Heart right ventricle (tissue), 16 donors: ENCODE measurements at regions of chrX and their contacts with region 1.

Region 1: GRCh38 chrX:147911192-147912022 is at the start of gene FMR1:
- DNase-seq: peak; percentile 91
- ATAC-seq: peak; percentile 91 to 98 (median 96)
- H3K4me3 ChIP-seq: peak within 1 kb of the TSS; percentile 47 to 88 (median 79)
- H3K27ac ChIP-seq: peak within 1 kb of the TSS; percentile 61 to 93 (median 88)
- H3K4me1 ChIP-seq: peaks cover 0 to 36% (median 13%) of the 10 kb centered on the region in 9 donors
- H3K27me3 ChIP-seq: no peaks in the 10 kb centered on the region
- CTCF ChIP-seq: no peak
- total RNA-seq, gene FMR1: 21.3 to 30.2 (median 28.0) TPM

Region 2: DNA sequence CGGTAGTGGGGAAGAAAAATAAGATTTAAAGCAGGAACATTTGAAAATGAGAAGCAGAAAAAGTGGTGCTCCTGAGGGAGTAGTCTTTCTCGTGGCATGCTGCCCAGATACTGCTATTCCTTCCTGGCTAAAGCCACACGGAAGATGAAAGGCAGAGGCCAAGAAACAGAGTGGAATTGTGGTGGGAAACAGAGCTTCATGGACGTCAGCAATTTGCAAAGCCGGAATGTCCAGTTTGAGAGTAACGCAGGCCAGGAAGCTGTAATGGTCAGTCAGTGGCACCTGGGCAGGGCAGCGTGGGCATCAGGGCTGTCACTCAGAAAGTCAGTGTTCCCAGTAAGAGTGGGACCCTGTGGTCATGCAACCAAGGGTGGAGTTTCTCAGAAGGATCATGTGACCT is 63.4 kb before region 1 on chrX:
- intact Hi-C with region 1: no loop called
- DNase-seq: no peak
- ATAC-seq: no peak
- H3K4me3 ChIP-seq: no peak overlapping the region
- H3K27ac ChIP-seq: no peak overlapping the region
- H3K4me1 ChIP-seq: no peaks in the 10 kb centered on the region
- H3K27me3 ChIP-seq: no peaks in the 10 kb centered on the region
- CTCF ChIP-seq: no peak

Region 3: GRCh38 chrX:148024425-148025148 is 113.2 kb after region 1 on chrX:
- intact Hi-C with region 1: no loop called
- DNase-seq: no peak
- ATAC-seq: no peak
- H3K4me3 ChIP-seq: no peak overlapping the region
- H3K27ac ChIP-seq: no peak overlapping the region
- H3K4me1 ChIP-seq: no peaks in the 10 kb centered on the region
- H3K27me3 ChIP-seq: no peaks in the 10 kb centered on the region
- CTCF ChIP-seq: no peak

Region 4: GRCh38 chrX:148035380-148035779 is 124.0 kb after region 1 on chrX:
- intact Hi-C with region 1: loop called in 2 of 10 experiments (anchors 5 to 10 kb)
- DNase-seq: no peak
- ATAC-seq: peak in 7 of 8 donors; percentile 58 to 92 (median 78)
- H3K4me3 ChIP-seq: no peak overlapping the region
- H3K27ac ChIP-seq: peak overlapping the region in 5 of 10 donors; percentile 22 to 62 (median 50)
- H3K4me1 ChIP-seq: no peaks in the 10 kb centered on the region
- H3K27me3 ChIP-seq: no peaks in the 10 kb centered on the region
- CTCF ChIP-seq: no peak

Region 5: DNA sequence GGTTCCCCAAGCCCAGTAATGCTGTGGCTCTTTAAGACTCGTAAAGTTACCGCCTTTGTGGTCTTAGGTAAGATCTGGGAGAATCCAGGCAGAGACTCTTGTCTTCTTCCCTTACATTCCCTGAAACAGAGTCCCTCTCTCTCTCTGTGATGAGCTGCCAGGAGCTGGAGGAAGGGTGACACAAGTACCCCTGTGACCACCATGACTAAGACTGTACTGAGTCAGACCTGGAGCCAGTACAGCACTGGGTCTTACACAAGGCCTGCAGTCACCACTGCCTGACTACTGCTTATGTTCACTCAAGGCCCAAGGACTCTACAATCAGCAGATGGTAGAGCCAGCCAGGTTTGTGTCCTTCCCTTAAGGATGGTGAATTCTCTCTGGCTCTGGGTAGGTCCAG is 132.0 kb after region 1 on chrX:
- intact Hi-C with region 1: loop called in 2 of 10 experiments (anchors 5 to 10 kb)
- DNase-seq: no peak
- ATAC-seq: no peak
- H3K4me3 ChIP-seq: no peak overlapping the region
- H3K27ac ChIP-seq: no peak overlapping the region
- H3K4me1 ChIP-seq: no peaks in the 10 kb centered on the region
- H3K27me3 ChIP-seq: no peaks in the 10 kb centered on the region
- CTCF ChIP-seq: no peak

Region 6: DNA sequence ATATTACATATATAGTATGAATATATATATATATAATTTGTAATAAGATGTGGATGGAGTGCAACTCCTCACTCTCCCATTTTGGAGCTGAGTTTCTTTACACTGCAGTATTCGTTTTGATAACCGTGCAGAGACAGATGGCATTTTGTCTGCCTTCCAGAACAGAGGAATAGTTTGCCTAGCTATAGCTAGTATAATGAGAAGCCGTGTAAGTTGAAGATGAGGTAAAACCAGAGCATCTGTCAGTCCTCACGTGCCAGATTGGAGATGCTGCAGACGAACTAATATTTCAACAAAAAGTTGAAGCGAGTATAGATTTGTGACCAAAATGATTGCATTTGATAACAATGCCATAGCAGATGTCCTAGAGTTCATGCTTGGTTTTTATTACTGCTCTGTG is 250.3 kb after region 1 on chrX:
- intact Hi-C with region 1: no loop called
- DNase-seq: no peak
- ATAC-seq: no peak
- H3K4me3 ChIP-seq: no peak overlapping the region
- H3K27ac ChIP-seq: no peak overlapping the region
- H3K4me1 ChIP-seq: no peaks in the 10 kb centered on the region
- H3K27me3 ChIP-seq: no peaks in the 10 kb centered on the region
- CTCF ChIP-seq: no peak

Region 7: GRCh38 chrX:149069869-149070268 is 1158.5 kb after region 1 on chrX:
- intact Hi-C with region 1: no loop called
- DNase-seq: no peak
- ATAC-seq: no peak
- H3K4me3 ChIP-seq: no peak overlapping the region
- H3K27ac ChIP-seq: no peak overlapping the region
- H3K4me1 ChIP-seq: peaks cover 0 to 9% (median 0%) of the 10 kb centered on the region in 9 donors
- H3K27me3 ChIP-seq: no peaks in the 10 kb centered on the region
- CTCF ChIP-seq: no peak